Tibial artery (tissue), 4 donors: ENCODE measurements at regions of chr17 and their contacts with region 1.

Region 1: DNA sequence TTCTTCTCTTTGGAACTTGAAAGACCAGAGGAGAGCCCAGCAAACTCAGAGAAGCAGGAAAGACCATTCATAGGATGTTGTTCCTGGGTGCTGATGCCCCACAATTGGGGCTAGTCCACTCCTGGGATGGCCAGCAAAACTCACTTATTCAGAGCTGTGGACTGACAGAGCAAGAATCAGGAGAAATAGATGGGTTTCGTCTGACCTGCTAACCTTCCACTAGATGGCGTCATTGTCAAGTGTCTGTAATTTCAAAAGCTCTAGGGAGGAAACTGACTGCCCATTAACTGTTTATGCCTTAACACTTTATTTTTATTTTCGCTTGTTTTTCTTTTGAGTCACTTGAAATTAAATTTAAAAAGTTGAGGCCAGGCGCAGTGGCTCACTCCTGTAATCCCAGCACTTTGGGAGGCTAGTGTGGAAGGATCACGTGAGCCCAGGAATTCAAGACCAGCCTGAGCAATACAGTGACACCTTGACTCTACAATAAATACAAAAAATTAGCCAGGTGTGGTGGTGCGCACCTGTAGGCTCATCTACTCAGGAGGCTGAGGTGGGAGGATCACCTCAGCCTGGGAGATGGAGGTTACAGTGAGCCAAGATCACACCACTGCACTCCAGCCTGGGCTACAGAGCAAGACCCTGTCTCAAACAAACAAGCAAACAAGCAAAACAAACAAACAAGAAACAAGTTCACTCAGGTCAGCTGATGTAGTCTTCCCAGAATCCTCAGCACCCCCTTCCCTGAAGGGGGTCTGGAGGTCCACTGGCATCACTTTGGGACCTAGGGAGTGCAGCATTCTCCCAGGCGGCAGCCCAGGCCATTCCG is 28.6 kb upstream of the MILR1 start:
- DNase-seq: no peak
- H3K4me3 ChIP-seq: no peak overlapping the region
- H3K27ac ChIP-seq: no peak overlapping the region
- H3K4me1 ChIP-seq: peaks cover 0 to 4% (median 0%) of the 10 kb centered on the region in 4 donors
- H3K27me3 ChIP-seq: no peaks in the 10 kb centered on the region
- CTCF ChIP-seq: peak; percentile 64 to 70

Region 2: GRCh38 chr17:64315032-64315490 is 105.3 kb before region 1 on chr17:
- intact Hi-C with region 1: loop called (anchors 5 kb)
- DNase-seq: peak; percentile 94 to 95
- H3K4me3 ChIP-seq: no peak overlapping the region
- H3K27ac ChIP-seq: peak overlapping the region; percentile 39 to 54
- H3K4me1 ChIP-seq: peaks cover 0 to 14% (median 2%) of the 10 kb centered on the region in 4 donors
- H3K27me3 ChIP-seq: no peaks in the 10 kb centered on the region
- CTCF ChIP-seq: no peak

Region 3: DNA sequence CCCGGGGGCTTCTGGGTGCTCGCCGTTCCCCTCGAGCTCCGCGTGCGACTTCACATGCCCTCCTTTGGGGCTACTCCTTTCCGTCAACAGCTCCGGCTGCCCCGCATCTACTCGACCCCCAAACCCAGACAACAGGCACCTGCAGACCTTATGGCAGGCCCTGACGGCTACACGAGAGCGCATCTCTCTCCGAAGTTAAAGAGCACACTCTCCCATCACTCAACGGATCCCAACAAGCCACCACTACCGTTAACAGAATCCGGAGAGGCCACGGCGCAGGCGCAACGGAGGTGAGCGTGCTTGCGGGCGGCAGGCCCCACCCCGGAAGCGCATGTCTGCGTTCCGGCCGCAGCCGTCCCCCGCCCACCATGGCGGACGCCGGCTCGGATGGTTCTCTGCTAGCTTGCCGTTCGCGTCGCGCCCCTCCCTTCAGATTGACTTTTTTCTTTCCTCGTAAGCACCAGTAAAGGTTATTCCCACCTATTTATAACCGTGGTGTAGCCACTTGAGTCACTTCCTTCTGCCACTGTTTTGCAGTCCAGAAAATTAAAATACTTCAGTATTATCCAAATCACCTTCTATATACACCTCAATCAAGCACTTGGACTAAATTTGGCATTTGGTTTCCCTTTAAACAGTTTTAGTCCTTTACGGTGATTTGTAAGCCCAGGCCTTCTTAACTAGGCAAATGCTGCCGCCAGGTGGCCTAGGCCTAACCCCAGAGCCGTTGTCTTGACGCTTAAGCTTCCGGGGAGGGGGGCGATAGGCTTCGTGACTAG is 76.6 kb after region 1 on chr17 and contains the start of gene POLG2:
- intact Hi-C with region 1: loop called (anchors 5 kb)
- DNase-seq: peak; percentile 92 to 94
- H3K4me3 ChIP-seq: peak within 1 kb of the TSS; percentile 74 to 75
- H3K27ac ChIP-seq: peak within 1 kb of the TSS; percentile 79 to 80
- H3K4me1 ChIP-seq: peaks cover 7 to 70% (median 42%) of the 10 kb centered on the region in 4 donors
- H3K27me3 ChIP-seq: no peaks in the 10 kb centered on the region
- CTCF ChIP-seq: peak in 1 of 2 experiments; percentile 32